ENCODE measurements at regions of chr9 and their contacts with region 1.

Region 1: GRCh38 chr9:128455849-128456612 is at the start of gene ODF2:
- DNase-seq: peak; percentile 98 to 99 (median 99)
- ATAC-seq: peak; percentile 96
- H3K4me3 ChIP-seq: peak within 1 kb of the TSS; percentile 79
- H3K27ac ChIP-seq: peak within 1 kb of the TSS; percentile 80
- H3K4me1 ChIP-seq: peaks cover 6 to 26% of the 10 kb centered on the region in 2 experiments; a peak in 3 of 5 replicates
- H3K27me3 ChIP-seq: no peaks in the 10 kb centered on the region
- CTCF ChIP-seq: 0 out of 6 replicates have a peak, but pooled peaks of 1 of the 3 experiments have one; percentile 1
- EP300 ChIP-seq: 0 out of 2 replicates have a peak, but pooled peaks have one; percentile 4
- POLR2A ChIP-seq: peak; percentile 87
- RAD21 ChIP-seq: no peak
- polyA plus RNA-seq, gene ODF2: 16.5 to 69.7 TPM

Region 2: GRCh38 chr9:128494108-128494745 is 38.2 kb after region 1 on chr9:
- CTCF ChIA-PET with region 1: no interaction called
- POLR2A ChIA-PET with region 1: interaction called, 3 read pairs
- in situ Hi-C with region 1: no loop called
- intact Hi-C with region 1: loop called (anchors 5 kb)
- DNase-seq: peak; percentile 49 to 89 (median 65)
- ATAC-seq: peak; percentile 87
- H3K4me3 ChIP-seq: no peak overlapping the region
- H3K27ac ChIP-seq: peak overlapping the region; percentile 66
- H3K4me1 ChIP-seq: peaks cover 12 to 17% of the 10 kb centered on the region in 2 experiments
- H3K27me3 ChIP-seq: no peaks in the 10 kb centered on the region
- CTCF ChIP-seq: no peak
- EP300 ChIP-seq: peak; percentile 14; the same call in 1 of the 2 replicates
- POLR2A ChIP-seq: no peak
- RAD21 ChIP-seq: 0 out of 4 replicates have a peak, but pooled peaks of 1 of the 2 experiments have one; percentile 23

Measured in K562 (cell line).